GM10248 (cell line): ENCODE measurements at regions of chr17 and their contacts with region 1.

Region 1: GRCh38 chr17:58577642-58578091 is 63.2 kb upstream of the MTMR4 start:
- DNase-seq: peak; percentile 65
- CTCF ChIP-seq: peak; percentile 61

Region 2: GRCh38 chr17:58556833-58557250 is 20.8 kb before region 1 on chr17:
- CTCF ChIA-PET with region 1: interaction called, 13 read pairs
- POLR2A ChIA-PET with region 1: no interaction called
- DNase-seq: no peak
- CTCF ChIP-seq: no peak

Region 3: GRCh38 chr17:58587702-58588254 is 10.1 kb after region 1 on chr17:
- CTCF ChIA-PET with region 1: interaction called, 73 read pairs
- POLR2A ChIA-PET with region 1: no interaction called
- DNase-seq: peak; percentile 77
- CTCF ChIP-seq: peak; percentile 86

Region 4: DNA sequence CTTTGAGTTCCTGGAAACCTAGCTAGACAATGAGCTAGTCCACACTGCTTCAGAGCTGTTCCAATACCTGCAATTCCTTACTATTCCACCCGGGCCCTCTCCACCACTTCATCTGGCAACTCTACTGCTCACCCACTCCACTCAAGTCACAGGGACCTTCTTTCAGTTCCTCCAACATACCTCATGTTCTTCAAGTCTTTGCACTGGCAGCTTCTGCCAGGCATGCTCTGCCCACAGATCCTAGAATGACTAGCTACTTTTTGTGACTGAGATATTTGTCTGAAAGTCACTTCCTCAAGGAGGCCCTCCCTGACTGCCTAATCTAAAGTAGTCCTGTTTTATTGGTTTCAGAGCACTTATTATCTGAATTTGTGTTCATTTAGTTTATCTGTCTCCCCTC is 27.8 kb after region 1 on chr17:
- CTCF ChIA-PET with region 1: interaction called, 18 read pairs
- POLR2A ChIA-PET with region 1: interaction called, 3 read pairs
- DNase-seq: no peak
- CTCF ChIP-seq: no peak

Region 5: DNA sequence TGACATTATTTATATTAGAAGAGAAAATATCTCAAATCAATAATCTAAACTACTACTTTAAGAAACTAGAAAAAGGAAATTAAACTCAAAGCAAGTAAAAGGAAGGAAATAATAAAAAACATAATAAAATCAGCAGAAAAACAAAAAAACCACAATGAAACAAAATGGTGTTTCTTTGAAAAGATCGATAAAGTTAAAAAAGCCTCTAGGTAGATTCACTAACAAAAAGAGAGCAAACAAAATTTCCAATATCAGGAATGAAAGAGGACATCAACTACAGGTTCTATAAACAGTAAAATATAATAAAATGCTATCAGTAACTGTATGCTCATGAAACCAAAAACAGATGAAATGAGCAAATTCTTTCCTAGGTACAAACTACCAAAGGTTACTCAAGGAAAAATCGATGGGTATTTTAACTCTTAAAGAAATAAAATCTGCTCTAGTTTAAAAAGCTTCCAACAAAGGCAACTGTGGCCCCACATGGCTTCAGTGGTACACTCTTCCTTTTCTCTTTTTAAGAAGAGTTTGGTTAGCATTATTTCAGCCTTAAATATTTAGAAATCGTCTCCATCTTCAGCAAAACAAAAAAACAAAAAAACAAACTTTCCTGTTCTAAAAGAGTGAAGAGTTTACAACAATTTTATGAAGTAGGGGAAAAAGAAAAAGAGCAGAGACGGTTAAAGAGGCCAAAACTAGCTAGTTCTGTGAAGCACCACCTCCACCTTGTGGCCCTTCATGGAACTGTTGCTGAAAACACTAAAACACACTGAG is 426.9 kb after region 1 on chr17:
- CTCF ChIA-PET with region 1: interaction called, 78 read pairs
- POLR2A ChIA-PET with region 1: no interaction called
- DNase-seq: peak; percentile 57
- CTCF ChIP-seq: peak; percentile 88

Region 6: GRCh38 chr17:59094916-59095530 is 517.4 kb after region 1 on chr17:
- CTCF ChIA-PET with region 1: no interaction called
- POLR2A ChIA-PET with region 1: no interaction called
- DNase-seq: no peak
- CTCF ChIP-seq: no peak